HCT116 (cell line): ENCODE measurements at regions of chr6 and their contacts with region 1.

Region 1: DNA sequence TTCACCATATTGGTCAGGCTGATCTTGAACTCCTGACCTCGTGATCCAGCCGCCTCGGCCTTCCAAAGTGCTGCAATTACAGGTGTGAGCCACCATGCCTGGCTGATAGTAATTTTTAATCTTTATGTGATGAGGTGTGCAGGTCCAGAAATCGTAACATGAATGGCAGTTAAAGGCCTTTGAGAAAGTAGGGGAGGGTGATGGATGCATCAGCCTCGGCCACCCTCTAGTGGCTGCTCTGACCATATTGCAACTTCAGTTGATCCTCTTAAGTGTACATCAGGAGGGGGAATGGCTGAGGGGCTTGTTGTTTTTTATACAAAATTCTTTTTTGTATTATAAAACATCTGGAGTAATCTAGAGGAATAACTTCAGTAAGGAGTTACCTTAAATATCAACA is 193.0 kb downstream of the ZFAND3 start:
- DNase-seq: peak; percentile 44
- ATAC-seq: peak; percentile 93
- H3K4me3 ChIP-seq: no peak overlapping the region
- H3K27ac ChIP-seq: no peak overlapping the region
- H3K4me1 ChIP-seq: no peaks in the 10 kb centered on the region
- H3K27me3 ChIP-seq: no peaks in the 10 kb centered on the region
- CTCF ChIP-seq: peak; percentile 63 to 82 (median 75); a peak in 5 of 6 replicates
- POLR2A ChIP-seq: no peak
- RAD21 ChIP-seq: peak; percentile 80

Region 2: DNA sequence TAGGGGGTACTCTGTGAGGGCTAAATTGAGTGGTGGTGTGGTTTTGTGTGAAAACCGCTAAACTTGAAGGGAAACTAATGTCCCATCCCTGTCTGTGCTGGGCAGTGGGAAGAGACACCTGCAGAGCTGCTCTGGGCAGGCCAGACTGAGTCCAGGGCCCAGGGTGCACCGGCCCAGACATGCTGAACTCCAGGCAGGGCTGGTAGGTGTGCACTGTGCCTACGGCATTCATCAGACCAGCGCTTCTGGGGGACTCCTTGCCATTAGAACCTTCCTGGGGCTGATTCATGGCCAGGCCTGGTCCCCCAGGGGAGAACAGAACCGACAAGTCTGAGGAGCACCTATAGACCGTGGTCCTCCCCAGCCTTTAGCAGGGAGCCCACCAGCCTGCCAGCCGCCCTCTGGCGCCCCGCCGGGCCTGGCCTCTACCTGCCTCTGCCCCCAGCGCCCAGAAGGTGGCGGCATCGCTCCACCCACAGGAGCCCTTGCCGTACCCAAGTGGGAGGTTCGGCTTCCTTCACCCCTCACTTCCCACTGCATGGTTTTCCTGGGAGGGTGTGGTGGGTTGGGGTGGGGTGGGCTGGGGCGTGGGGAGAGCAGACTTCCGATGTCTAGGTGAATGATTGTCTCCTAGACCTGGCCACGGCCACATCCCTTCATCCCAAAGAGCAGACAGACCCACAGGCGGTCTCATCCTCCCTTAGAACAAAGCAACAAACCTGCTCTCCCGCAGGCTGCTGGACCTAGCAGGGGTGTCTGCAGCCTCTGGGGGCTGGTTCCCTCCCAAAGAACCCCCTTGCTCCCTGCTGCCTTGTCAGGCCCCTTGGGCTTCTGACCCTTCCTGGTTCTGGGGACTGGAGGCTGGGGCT is 528.4 kb before region 1 on chr6:
- CTCF ChIA-PET with region 1: no interaction called
- POLR2A ChIA-PET with region 1: no interaction called
- RAD21 ChIA-PET with region 1: no interaction called
- intact Hi-C with region 1: loop called (anchors 1 kb)
- DNase-seq: no peak
- ATAC-seq: peak; percentile 92
- H3K4me3 ChIP-seq: no peak overlapping the region
- H3K27ac ChIP-seq: no peak overlapping the region
- H3K4me1 ChIP-seq: no peaks in the 10 kb centered on the region
- H3K27me3 ChIP-seq: no peaks in the 10 kb centered on the region
- CTCF ChIP-seq: peak; percentile 69 to 90 (median 75); a peak in 5 of 6 replicates
- POLR2A ChIP-seq: no peak
- RAD21 ChIP-seq: peak; percentile 90

Region 3: DNA sequence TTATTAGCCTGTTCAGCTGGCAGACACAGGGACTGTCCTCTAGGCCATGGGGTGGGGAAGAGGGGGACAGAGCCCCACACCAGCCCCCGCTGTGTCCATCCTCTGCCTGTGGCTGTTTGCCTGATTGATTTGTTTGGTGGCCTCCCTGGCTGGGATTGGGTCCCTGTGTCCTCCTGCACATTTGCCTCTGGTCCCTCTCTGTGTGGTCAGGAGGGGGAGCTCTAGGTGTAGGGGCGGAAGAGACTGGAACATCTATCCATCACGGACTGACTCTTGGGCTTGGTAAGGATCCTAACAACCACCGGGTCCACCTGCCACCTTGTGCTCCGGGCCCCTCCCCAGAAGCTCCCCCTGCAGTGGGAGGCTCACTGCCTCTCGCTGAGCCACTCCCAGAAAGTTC is 474.5 kb before region 1 on chr6:
- CTCF ChIA-PET with region 1: no interaction called
- POLR2A ChIA-PET with region 1: no interaction called
- RAD21 ChIA-PET with region 1: no interaction called
- intact Hi-C with region 1: loop called (anchors 10 kb)
- DNase-seq: peak; percentile 45
- ATAC-seq: peak; percentile 98
- H3K4me3 ChIP-seq: no peak overlapping the region
- H3K27ac ChIP-seq: no peak overlapping the region
- H3K4me1 ChIP-seq: peaks cover 0 to 9% of the 10 kb centered on the region in 2 experiments; a peak in 2 of 4 replicates
- H3K27me3 ChIP-seq: peaks cover 7% of the 10 kb centered on the region; the same call in 1 of the 2 replicates
- CTCF ChIP-seq: peak; percentile 74 to 88 (median 82)
- POLR2A ChIP-seq: no peak
- RAD21 ChIP-seq: peak; percentile 98

Region 4: DNA sequence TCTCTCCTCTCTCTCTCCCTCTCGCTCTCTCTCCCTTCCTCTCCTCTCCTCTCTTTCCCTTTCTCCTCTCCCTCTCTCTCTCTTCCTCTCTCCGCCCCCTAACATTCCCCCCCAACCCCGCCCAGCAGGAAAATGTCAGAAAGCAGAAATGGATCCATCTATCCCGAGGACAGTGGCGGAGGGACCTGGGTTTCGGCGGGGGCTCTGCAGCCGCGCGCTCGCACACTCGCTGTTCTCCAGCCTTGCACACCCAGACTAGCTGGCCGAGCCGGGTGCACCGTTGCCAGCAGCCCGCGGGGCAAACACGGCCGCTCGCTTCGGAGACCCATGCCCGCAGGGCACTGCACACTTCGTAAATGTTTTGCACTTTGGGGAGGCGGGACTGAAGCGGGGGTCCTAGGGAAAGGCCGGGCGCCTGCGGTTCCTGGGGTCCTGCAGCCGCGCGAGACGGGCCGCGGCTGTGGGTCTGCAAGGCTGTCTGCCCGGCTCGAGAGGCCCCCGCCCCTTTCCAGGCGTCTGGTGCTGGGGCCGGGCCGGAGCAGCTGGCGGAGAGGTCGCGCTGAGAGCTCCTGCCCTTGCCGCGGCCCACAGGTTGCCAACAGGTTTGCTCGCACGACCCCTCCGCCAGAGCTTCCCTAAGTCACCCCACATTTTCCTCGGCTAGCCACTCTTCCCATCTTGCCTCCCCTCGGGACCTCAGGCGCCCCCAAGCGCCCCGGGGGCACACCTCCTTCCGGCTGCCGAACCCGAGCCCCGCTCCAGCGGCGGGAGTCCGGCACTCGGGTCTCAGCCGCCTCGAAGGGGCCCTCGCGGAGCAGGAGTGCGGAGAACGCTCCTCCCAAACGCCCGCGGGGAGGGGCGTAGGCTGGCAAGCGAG is 314.1 kb before region 1 on chr6:
- CTCF ChIA-PET with region 1: no interaction called
- POLR2A ChIA-PET with region 1: no interaction called
- RAD21 ChIA-PET with region 1: no interaction called
- intact Hi-C with region 1: loop called (anchors 5 kb)
- DNase-seq: peak; percentile 24
- ATAC-seq: peak; percentile 74
- H3K4me3 ChIP-seq: peak overlapping the region; percentile 62 to 78
- H3K27ac ChIP-seq: peak overlapping the region; percentile 46; the same call in 1 of the 2 replicates
- H3K4me1 ChIP-seq: peaks cover 11 to 14% of the 10 kb centered on the region in 2 experiments
- H3K27me3 ChIP-seq: no peaks in the 10 kb centered on the region
- CTCF ChIP-seq: no peak; a peak in 1 of 6 replicates
- POLR2A ChIP-seq: no peak
- RAD21 ChIP-seq: no peak

Region 5: DNA sequence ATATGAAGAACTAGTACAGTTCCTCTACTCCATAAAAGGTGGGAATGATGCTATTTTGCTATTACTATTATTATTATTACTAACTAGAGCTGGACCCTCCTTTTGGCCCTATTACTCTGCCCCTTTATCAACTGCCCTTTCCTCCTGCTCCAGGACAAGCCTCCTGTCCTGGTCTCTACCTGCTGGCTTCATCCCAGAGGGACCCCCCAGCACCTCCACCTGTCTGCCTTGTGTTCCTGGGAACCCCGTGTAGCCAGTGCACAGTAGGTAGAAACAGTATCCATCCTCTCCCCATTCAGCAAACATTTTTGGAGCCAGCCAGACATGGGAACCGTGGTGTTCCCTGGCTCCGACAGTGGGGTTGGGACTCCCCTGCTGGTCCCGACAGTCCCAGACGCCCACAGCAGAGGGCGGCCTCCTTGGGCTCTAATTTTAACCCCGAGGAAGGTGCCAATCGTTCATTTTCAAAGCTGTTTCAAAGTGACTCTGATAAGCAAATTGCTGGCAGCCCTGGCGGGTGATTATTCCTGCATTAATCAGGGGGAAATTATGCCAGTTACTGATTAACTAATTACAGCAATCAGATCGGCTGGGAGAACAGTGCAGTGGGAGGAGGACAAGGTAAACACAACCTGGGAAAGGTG is 270.7 kb before region 1 on chr6:
- CTCF ChIA-PET with region 1: no interaction called
- POLR2A ChIA-PET with region 1: no interaction called
- RAD21 ChIA-PET with region 1: no interaction called
- intact Hi-C with region 1: loop called (anchors 2 kb)
- DNase-seq: no peak
- ATAC-seq: peak; percentile 92
- H3K4me3 ChIP-seq: no peak overlapping the region
- H3K27ac ChIP-seq: no peak overlapping the region
- H3K4me1 ChIP-seq: peaks cover 0 to 8% of the 10 kb centered on the region in 2 experiments; a peak in 2 of 4 replicates
- H3K27me3 ChIP-seq: peaks cover 11% of the 10 kb centered on the region
- CTCF ChIP-seq: peak; percentile 39 to 65 (median 63); a peak in 4 of 6 replicates
- POLR2A ChIP-seq: no peak
- RAD21 ChIP-seq: peak; percentile 57

Region 6: GRCh38 chr6:37946057-37946456 is 66.5 kb before region 1 on chr6:
- CTCF ChIA-PET with region 1: no interaction called
- POLR2A ChIA-PET with region 1: no interaction called
- RAD21 ChIA-PET with region 1: no interaction called
- intact Hi-C with region 1: no loop called
- DNase-seq: no peak
- ATAC-seq: no peak
- H3K4me3 ChIP-seq: no peak overlapping the region
- H3K27ac ChIP-seq: no peak overlapping the region
- H3K4me1 ChIP-seq: no peaks in the 10 kb centered on the region
- H3K27me3 ChIP-seq: no peaks in the 10 kb centered on the region
- CTCF ChIP-seq: no peak
- POLR2A ChIP-seq: no peak
- RAD21 ChIP-seq: no peak